Transverse colon (tissue), 4 donors: ENCODE measurements at regions of chr5 and their contacts with region 1.

Region 1: GRCh38 chr5:34486160-34486848 is 169.8 kb upstream of the RAI14 start:
- DNase-seq: peak; percentile 78
- H3K4me3 ChIP-seq: no peak overlapping the region
- H3K27ac ChIP-seq: peak overlapping the region in 2 of 4 donors; percentile 0 to 7
- H3K4me1 ChIP-seq: peaks cover 0 to 18% (median 3%) of the 10 kb centered on the region in 4 donors
- H3K27me3 ChIP-seq: no peaks in the 10 kb centered on the region
- CTCF ChIP-seq: peak; percentile 74 to 86 (median 83)
- EP300 ChIP-seq: no peak
- POLR2A ChIP-seq: no peak

Region 2: DNA sequence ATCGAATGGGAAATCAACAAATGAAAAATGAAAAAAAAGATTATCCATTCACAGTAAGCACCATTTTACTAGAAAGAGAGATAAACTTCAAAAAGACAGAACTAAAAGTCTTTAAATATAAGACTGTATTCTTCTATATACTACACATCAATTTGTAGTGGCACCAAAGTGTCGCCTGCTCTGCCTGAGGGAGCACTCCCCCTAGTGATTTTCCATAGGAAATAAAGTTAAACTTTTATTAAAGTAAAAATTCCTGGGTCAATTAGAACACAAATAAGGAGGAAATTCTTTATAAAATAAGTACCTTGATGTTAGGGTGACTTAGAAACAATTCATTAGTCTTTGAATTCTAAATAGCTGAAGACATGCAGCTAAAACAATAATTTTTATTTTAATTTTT is 419.3 kb after region 1 on chr5:
- in situ Hi-C with region 1: loop called (anchors 5 to 10 kb)
- intact Hi-C with region 1: no loop called
- DNase-seq: no peak
- H3K4me3 ChIP-seq: no peak overlapping the region
- H3K27ac ChIP-seq: no peak overlapping the region
- H3K4me1 ChIP-seq: no peaks in the 10 kb centered on the region
- H3K27me3 ChIP-seq: no peaks in the 10 kb centered on the region
- CTCF ChIP-seq: no peak
- EP300 ChIP-seq: no peak
- POLR2A ChIP-seq: no peak

Region 3: DNA sequence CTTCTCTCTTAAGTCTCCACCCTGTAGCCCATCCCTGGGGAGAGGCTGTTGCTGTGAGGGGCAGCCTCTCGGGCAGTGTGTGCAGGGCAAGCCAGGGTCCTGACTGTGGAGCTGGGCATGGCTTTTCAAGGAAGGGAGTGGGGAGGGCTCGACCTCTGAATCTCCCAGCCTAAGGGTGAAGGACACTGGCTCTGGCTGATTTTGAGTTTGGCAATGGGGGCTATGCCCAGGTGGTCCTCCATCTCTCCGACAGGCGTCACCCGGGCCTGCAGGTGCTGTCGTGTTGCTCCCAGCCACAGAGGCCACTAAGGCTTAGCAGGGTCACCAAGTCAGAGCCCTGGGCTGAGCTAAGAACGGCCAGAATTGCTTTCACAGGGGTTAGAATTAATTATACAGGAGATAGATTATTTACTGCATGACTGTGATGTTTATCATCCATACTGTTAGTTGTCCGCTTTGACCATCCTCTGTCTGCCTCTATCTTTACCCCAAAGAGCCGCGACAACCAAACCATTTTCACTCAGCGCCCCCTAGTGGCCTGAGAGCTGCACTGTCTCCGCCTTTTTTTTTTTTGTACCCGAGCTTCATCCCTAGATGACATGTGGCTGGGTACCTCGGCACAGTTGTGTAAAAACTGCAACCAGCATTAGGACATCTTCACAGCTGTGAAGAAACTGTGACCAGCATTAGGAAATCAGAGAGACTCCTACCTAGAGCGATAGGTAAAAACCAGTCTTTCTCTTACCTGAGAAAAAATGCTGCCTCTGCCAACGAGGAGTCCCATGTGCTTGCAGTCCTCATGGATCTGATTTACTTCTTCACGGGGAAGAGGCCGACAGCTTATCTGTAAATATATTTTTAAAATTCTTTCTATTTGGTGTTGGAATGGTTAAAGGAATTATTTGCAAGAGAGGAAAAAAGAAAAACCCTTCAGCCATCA is 517.0 kb after region 1 on chr5:
- in situ Hi-C with region 1: loop called in 1 of 4 experiments (anchors 25 kb)
- intact Hi-C with region 1: no loop called
- DNase-seq: peak; percentile 50
- H3K4me3 ChIP-seq: no peak overlapping the region
- H3K27ac ChIP-seq: no peak overlapping the region
- H3K4me1 ChIP-seq: no peaks in the 10 kb centered on the region
- H3K27me3 ChIP-seq: peaks cover 6% of the 10 kb centered on the region
- CTCF ChIP-seq: peak; percentile 62 to 89 (median 86)
- EP300 ChIP-seq: no peak
- POLR2A ChIP-seq: no peak